Thyroid gland (tissue), 4 donors: ENCODE measurements at regions of chr1 and their contacts with region 1.

Region 1: DNA sequence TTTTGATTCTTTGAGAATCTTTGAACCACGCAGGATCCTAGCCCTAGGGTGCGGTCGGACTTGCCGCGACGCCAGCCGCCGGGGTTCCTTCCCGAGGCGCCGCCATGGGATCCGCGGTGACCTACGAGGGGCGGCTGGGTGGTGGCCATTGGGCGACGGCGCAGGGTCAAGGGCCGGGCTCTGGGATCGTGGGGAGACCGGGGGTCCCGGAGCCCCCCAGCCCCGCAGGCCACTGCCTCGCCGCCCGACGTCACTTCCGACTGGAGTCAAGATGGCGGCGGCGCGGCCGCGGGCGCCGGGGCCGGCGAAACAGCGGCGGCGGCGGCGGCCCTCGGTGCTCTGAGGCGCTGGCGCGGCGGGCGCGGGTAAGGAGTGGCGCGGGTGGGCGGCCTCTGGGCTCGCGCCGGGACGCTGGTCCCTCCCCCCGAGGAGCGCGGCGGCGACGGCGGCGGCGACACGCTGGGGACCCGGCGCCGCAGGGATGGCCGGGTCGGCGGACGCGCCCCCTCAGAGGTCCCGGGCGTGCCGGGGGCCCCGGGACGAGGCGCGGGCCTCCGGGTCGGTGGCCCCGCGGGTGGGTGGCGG is at the start of gene PRDM2:
- DNase-seq: peak; percentile 58 to 61
- H3K4me3 ChIP-seq: peak within 1 kb of the TSS; percentile 35 to 96 (median 67)
- H3K27ac ChIP-seq: peak within 1 kb of the TSS; percentile 86 to 94 (median 88)
- H3K4me1 ChIP-seq: peaks cover 4 to 5% of the 10 kb centered on the region in 2 donors
- H3K27me3 ChIP-seq: no peaks in the 10 kb centered on the region
- CTCF ChIP-seq: no peak
- POLR2A ChIP-seq: peak in 1 of 2 donors; percentile 69
- total RNA-seq, gene PRDM2: 39.5 to 63.9 (median 45.4) TPM

Region 2: DNA sequence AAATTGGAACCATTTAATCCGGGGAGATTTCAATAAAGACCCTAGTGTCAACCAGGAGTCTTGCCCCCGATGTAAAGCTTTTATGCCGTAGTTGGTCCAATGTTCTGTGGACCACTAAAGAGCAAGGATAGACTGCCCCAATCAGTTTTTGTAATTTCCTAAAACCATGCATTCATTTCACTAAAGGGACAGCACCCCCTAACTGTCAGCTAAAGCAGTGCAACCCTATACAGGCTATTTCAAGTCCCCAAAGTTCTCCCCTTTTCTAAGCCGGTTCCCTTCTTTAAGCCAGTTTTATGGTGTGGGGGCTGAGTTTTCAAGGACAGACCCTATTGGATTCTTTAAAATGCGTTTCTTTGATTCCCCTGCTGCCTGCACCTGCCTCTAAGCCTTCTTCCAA is 129.1 kb before region 1 on chr1:
- intact Hi-C with region 1: no loop called
- DNase-seq: no peak
- H3K4me3 ChIP-seq: no peak overlapping the region
- H3K27ac ChIP-seq: no peak overlapping the region
- H3K4me1 ChIP-seq: no peaks in the 10 kb centered on the region
- H3K27me3 ChIP-seq: no peaks in the 10 kb centered on the region
- CTCF ChIP-seq: no peak
- POLR2A ChIP-seq: no peak

Region 3: GRCh38 chr1:13748610-13749505 is 48.8 kb after region 1 on chr1:
- intact Hi-C with region 1: loop called (anchors 10 kb)
- DNase-seq: peak; percentile 98
- H3K4me3 ChIP-seq: peak overlapping the region in 2 of 3 donors; percentile 77 to 97
- H3K27ac ChIP-seq: peak overlapping the region; percentile 87 to 95 (median 94)
- H3K4me1 ChIP-seq: peaks cover 40 to 41% of the 10 kb centered on the region in 2 donors
- H3K27me3 ChIP-seq: no peaks in the 10 kb centered on the region
- CTCF ChIP-seq: peak in 2 of 6 experiments; percentile 23 to 28
- POLR2A ChIP-seq: peak; percentile 87 to 99

Region 4: GRCh38 chr1:13807213-13807612 is 107.2 kb after region 1 on chr1:
- intact Hi-C with region 1: loop called (anchors 10 kb)
- DNase-seq: peak in 1 of 2 donors; percentile 27
- H3K4me3 ChIP-seq: no peak overlapping the region
- H3K27ac ChIP-seq: no peak overlapping the region
- H3K4me1 ChIP-seq: peaks cover 2 to 8% of the 10 kb centered on the region in 2 donors
- H3K27me3 ChIP-seq: no peaks in the 10 kb centered on the region
- CTCF ChIP-seq: no peak
- POLR2A ChIP-seq: no peak

Region 5: GRCh38 chr1:13828454-13829151 is 128.6 kb after region 1 on chr1:
- intact Hi-C with region 1: no loop called
- DNase-seq: peak; percentile 66 to 78
- H3K4me3 ChIP-seq: no peak overlapping the region
- H3K27ac ChIP-seq: no peak overlapping the region
- H3K4me1 ChIP-seq: peaks cover 14 to 21% of the 10 kb centered on the region in 2 donors
- H3K27me3 ChIP-seq: no peaks in the 10 kb centered on the region
- CTCF ChIP-seq: peak; percentile 41 to 71 (median 58)
- POLR2A ChIP-seq: no peak